ENCODE measurements at regions of chr16 and their contacts with region 1.

Region 1: GRCh38 chr16:59552164-59552563 is 818.0 kb upstream of the GOT2 start:
- DNase-seq: no peak

Region 2: DNA sequence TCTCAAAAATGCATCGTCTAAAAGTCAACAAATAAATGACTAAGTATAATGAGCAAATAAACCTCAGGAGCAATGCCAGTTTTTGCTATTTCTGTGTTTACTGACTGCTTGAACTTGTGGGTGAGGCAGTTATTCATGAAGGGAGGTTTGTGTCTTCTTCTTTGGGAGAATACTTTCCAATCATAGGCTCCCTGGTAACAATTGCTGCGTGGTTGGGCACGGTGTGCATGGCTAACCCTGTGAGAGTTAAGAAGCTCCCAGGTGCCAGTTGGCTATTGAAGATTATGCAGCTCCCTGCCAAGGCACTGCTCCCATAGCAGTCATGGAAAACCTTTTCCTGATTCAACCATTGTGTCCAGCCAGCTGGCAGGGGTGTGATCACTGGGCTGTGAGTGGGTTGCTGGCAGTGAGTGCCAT is 42.1 kb before region 1 on chr16:
- intact Hi-C with region 1: no loop called
- DNase-seq: no peak

Region 3: DNA sequence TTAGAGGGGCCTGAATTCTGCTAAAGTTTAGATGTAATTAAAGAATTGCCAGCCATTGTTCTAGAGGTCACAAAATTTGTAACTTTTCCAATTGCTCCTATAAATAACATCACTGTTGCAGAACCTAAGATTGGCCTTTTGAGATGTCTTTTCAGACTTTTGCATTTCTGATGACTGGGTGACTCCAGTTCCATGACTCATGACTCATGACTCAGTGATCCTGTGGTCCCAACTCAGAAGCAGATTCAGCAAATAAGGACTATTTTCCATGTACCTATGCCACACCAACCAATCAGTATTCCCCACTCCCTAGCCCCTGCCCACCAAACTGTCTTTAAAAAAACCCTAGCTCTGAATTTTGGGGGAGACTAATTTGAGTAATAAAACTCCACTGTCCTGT is 1743.1 kb after region 1 on chr16:
- intact Hi-C with region 1: loop called in 1 of 2 experiments (anchors 5 kb)
- DNase-seq: no peak

Measured in posterior vena cava (tissue), 2 donors.